ENCODE measurements at regions of chr6 and their contacts with region 1.

Region 1: DNA sequence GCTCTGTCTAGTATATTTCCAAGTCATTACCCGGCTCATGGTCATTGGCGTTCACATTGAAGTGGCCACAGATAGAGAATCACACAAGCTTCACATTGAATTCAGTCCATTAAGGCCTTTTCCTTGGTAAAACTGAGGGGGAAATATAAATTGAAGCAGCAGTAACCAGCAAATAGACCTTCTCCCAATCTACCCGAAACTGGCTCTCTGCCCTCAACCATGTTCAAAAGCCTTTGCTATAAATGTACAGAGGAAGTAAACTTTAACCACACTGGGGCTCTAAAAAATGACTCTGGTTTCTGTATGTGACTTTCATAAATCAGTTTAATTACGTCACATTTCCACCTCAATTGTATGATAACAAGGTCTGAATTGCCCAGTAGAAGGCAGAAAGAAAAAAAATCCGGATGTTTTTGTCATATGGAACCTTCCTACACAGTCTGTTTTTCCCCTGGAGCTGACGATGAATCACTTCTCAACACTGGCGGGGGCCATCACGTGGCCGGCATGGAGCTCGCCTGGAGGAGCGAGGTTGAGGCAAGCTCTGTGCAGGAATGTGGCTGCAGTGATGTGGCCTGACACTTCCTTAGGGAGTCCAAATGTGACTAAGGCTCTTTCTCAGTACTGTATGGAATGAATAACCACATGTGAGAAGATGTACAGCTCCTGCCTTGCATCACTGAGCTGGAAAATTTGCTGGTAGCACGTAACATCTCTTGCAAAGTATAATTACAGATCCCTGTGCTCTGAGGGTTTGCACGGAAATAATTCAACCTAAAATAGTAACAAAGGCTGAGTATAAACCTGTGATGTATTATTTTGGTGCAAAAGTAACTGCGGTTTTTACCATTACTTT is 58.6 kb upstream of the SNX9 start:
- DNase-seq: peak; percentile 91
- ATAC-seq: peak; percentile 75
- H3K4me3 ChIP-seq: peak overlapping the region in 1 of 2 experiments; percentile 17; a peak in 2 of 4 replicates
- H3K27ac ChIP-seq: peak overlapping the region; percentile 43
- H3K4me1 ChIP-seq: peaks cover 48 to 63% of the 10 kb centered on the region in 2 experiments
- H3K27me3 ChIP-seq: no peaks in the 10 kb centered on the region
- CTCF ChIP-seq: no peak
- POLR2A ChIP-seq: no peak
- RAD21 ChIP-seq: no peak

Region 2: GRCh38 chr6:157823001-157823527 is 58.7 kb after region 1 on chr6 and contains the start of gene SNX9:
- CTCF ChIA-PET with region 1: no interaction called
- POLR2A ChIA-PET with region 1: no interaction called
- RAD21 ChIA-PET with region 1: no interaction called
- intact Hi-C with region 1: loop called (anchors 5 kb)
- DNase-seq: peak; percentile 29
- ATAC-seq: peak; percentile 82
- H3K4me3 ChIP-seq: peak within 1 kb of the TSS; percentile 71 to 80
- H3K27ac ChIP-seq: peak within 1 kb of the TSS; percentile 88
- H3K4me1 ChIP-seq: peaks cover 15 to 24% of the 10 kb centered on the region in 2 experiments; a peak in 3 of 4 replicates
- H3K27me3 ChIP-seq: no peaks in the 10 kb centered on the region
- CTCF ChIP-seq: no peak
- POLR2A ChIP-seq: no peak
- RAD21 ChIP-seq: no peak
- total RNA-seq, gene SNX9: 42.5 TPM

Region 3: GRCh38 chr6:157946865-157947532 is 182.6 kb after region 1 on chr6:
- CTCF ChIA-PET with region 1: no interaction called
- POLR2A ChIA-PET with region 1: no interaction called
- RAD21 ChIA-PET with region 1: no interaction called
- intact Hi-C with region 1: loop called (anchors 5 kb)
- DNase-seq: no peak
- ATAC-seq: peak; percentile 81
- H3K4me3 ChIP-seq: no peak overlapping the region
- H3K27ac ChIP-seq: no peak overlapping the region
- H3K4me1 ChIP-seq: no peaks in the 10 kb centered on the region
- H3K27me3 ChIP-seq: no peaks in the 10 kb centered on the region
- CTCF ChIP-seq: peak; percentile 40 to 57 (median 55); a peak in 5 of 6 replicates
- POLR2A ChIP-seq: no peak
- RAD21 ChIP-seq: peak; percentile 72

Region 4: DNA sequence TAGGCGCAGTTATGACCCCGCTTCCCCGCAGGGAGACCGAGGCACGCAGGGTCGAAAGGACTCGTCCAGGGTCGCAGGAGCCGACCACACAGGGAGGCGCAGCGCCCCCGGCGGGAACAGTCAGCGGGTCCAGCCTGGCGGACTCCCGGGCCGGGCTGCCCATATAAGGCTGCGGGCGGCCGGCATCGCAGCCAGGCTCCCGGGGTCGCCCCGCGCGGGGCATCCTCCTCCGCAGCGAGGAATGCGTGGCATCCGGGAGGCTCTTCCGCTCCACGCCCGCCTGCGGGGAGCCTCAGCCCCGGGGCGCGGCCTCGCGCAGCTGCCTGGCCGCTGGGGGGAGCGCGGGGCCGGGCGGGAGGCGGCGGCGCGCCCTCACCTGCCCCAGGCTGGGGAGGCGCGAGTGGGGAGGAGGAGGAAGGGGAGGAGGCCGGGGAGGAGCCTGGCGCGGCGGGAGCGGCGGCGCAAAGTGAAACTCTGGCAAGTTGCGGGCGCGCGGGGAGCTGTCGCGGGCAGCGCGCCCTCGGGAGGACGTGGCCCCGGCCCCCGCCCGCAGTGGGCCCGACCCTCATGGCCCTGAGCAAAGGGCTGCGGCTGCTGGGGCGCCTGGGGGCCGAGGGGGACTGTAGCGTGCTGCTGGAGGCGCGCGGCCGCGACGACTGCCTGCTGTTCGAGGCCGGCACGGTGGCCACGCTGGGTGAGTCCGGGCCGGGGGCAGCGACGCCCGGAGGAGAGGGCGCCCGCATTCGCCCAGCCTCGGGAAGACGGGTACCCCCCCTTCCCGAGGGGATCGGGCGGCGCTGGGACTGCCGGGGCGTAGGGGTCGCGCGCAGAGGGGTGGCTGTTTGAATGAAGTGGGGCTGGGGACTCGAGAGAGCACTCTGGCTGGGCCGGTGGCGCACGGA is 217.2 kb after region 1 on chr6 and contains the start of gene SYNJ2:
- CTCF ChIA-PET with region 1: no interaction called
- POLR2A ChIA-PET with region 1: no interaction called
- RAD21 ChIA-PET with region 1: no interaction called
- intact Hi-C with region 1: loop called (anchors 5 kb)
- DNase-seq: no peak
- ATAC-seq: peak; percentile 94
- H3K4me3 ChIP-seq: peak within 1 kb of the TSS; percentile 63 to 76
- H3K27ac ChIP-seq: peak within 1 kb of the TSS; percentile 55; the same call in 1 of the 2 replicates
- H3K4me1 ChIP-seq: peaks cover 15 to 47% of the 10 kb centered on the region in 2 experiments; a peak in 3 of 4 replicates
- H3K27me3 ChIP-seq: no peaks in the 10 kb centered on the region
- CTCF ChIP-seq: peak; percentile 25 to 56 (median 48); a peak in 4 of 6 replicates
- POLR2A ChIP-seq: no peak
- RAD21 ChIP-seq: peak; percentile 46; the same call in 1 of the 2 replicates
- total RNA-seq, gene SYNJ2: 23.9 TPM

Region 5: DNA sequence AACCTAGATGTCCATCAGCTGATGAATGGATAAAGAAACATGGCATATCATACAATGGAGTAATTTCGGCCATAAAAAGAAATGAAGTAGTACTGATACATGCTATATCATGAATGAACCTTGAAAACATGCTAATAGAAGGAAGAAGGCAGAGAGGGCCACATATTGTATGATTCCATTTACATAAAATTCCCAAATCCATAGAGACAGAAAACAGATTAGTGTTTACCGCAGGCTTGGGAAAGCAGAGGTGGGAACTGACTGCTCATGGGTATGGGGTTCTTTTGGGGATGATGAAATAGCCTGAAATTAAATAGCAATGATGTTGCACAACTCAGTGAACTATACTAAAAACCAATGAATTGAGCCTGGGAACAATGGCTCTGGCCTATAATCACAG is 345.3 kb after region 1 on chr6:
- CTCF ChIA-PET with region 1: no interaction called
- POLR2A ChIA-PET with region 1: no interaction called
- RAD21 ChIA-PET with region 1: no interaction called
- intact Hi-C with region 1: no loop called
- DNase-seq: no peak
- ATAC-seq: no peak
- H3K4me3 ChIP-seq: no peak overlapping the region
- H3K27ac ChIP-seq: no peak overlapping the region
- H3K4me1 ChIP-seq: no peaks in the 10 kb centered on the region
- H3K27me3 ChIP-seq: no peaks in the 10 kb centered on the region
- CTCF ChIP-seq: no peak
- POLR2A ChIP-seq: no peak
- RAD21 ChIP-seq: no peak